Activated CD8-positive, alpha-beta memory T cell treated with anti-CD3 and anti-CD28 coated beads, Interleukin-2, amount 10 ng/mL, durations not matched to agents 7 days and 5 days (primary cell): ENCODE measurements at regions of chr1 and their contacts with region 1.

Region 1: DNA sequence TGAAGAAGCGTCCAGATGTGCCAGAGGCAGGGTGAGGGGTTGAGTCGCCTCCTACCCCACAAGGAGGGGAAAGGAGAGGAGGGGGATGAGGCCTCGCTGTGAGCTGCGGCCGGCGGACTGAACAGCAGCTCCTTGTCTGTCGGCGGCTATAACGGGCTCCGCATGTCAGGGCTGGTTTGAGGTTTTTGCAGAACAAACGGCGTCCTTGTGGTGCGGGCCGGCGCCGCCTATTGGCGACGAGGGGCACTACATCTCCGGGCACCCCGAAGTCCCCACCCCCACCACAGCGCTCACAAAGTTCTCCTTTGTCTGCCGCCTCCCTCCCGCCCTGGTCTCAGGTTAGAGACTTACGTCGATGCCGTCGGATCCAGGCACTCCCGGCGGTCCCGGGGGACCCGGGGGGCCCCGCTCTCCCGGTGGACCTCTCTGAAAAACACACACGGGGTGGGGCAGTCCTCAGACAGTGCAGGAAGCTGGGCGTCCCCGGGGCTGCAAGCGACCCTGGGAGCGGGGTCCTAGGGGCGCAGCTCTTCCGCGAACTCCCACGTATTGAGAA is 1.8 kb downstream of the COL9A2 start:
- DNase-seq: peak; percentile 90
- ATAC-seq: peak; percentile 77
- H3K4me3 Mint-ChIP-seq: peak overlapping the region; percentile 74
- H3K27ac Mint-ChIP-seq: peak overlapping the region; percentile 66
- H3K4me1 Mint-ChIP-seq: peaks cover 42% of the 10 kb centered on the region
- H3K27me3 Mint-ChIP-seq: peaks cover 25% of the 10 kb centered on the region

Region 2: DNA sequence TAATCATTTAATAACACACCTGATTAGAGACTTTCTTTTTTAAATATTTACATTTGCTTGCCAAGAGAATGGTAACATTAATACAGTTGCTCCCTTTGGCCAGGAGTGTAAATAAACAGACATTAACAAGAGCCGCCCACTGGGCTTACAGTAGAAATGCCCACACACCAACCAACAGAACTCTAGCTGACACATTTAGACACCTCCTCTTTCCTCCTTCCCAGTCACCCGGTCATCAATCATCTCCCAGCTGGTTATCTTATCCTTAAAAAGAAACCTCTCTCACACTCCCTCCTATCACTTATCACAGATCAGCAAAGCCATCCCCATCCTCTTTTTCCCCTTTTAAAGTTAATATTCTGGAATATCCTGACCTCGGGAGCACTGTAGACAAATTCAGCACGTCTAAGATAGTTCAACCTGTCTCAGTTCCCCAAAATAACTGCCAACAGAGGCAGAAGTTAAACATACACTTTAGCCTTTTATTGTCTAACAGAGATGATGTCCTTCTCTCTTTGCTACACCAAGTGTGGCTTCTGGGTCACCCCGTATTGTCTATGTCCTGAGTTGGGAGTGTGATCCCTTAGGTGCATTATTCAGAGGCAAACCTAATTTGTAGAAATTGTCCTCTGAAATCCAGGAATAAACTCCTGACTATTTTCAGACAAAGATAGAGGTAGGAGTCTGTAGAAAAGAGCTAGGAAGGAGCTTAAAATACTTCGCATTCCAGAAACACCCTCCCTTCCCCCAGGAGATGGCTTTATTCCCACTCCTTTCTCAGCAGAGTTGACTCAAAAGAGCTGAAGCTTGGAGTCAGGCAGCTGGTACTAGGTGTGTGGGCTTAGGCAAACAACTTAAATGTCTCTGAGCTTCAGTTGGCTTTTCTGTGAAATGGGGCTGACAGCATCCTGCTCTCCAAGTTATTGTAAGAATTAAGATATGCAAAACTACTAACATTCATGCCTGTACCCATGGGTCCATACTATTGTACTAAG is 422.4 kb before region 1 on chr1:
- CTCF ChIA-PET with region 1: no interaction called
- DNase-seq: no peak
- ATAC-seq: no peak
- H3K4me3 Mint-ChIP-seq: no peak overlapping the region
- H3K27ac Mint-ChIP-seq: no peak overlapping the region
- H3K4me1 Mint-ChIP-seq: no peaks in the 10 kb centered on the region
- H3K27me3 Mint-ChIP-seq: peaks cover 64% of the 10 kb centered on the region

Region 3: GRCh38 chr1:40107290-40108262 is 207.7 kb before region 1 on chr1:
- CTCF ChIA-PET with region 1: no interaction called
- DNase-seq: no peak
- ATAC-seq: no peak
- H3K4me3 Mint-ChIP-seq: no peak overlapping the region
- H3K27ac Mint-ChIP-seq: no peak overlapping the region
- H3K4me1 Mint-ChIP-seq: peaks cover 2% of the 10 kb centered on the region
- H3K27me3 Mint-ChIP-seq: peaks cover 19% of the 10 kb centered on the region

Region 4: DNA sequence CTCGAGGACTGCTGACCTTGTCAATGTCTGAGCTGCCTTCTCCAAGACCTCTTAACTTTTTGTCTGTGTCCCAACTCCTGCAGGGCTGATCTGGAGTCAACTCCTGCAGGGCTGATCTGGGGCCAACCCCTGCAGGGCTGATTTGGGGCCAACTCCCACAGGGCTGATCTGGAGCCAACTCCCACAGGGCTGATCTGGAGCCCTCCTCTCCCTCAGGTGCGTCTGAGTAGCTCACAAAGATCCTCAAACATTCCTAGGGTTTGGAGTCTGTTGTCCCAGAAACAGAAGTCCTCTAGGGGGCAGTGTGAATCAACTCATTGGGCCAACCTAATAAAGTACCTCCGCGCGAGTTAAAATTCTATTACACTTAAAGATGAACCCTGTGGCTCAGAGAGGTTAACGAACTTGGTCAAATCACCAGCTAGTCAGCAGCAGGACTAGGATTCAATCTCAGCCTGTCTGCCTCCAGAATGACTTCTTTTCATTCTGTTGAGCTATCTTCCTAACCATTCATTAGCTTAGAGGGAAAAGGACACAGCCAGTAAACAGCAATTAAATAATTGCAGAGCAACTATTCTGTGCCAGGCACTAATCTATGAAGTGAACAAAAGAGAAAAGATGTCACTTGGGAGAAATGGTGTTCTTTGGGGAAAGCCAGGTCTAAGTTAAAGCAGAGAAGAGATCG is 171.3 kb before region 1 on chr1:
- CTCF ChIA-PET with region 1: interaction called, 44 read pairs
- DNase-seq: peak; percentile 68
- ATAC-seq: peak; percentile 83
- H3K4me3 Mint-ChIP-seq: no peak overlapping the region
- H3K27ac Mint-ChIP-seq: no peak overlapping the region
- H3K4me1 Mint-ChIP-seq: peaks cover 16% of the 10 kb centered on the region
- H3K27me3 Mint-ChIP-seq: peaks cover 38% of the 10 kb centered on the region

Region 5: GRCh38 chr1:40161125-40161887 is 154.0 kb before region 1 on chr1 and contains the start of gene RLF:
- CTCF ChIA-PET with region 1: interaction called, 17 read pairs
- DNase-seq: peak; percentile 96
- ATAC-seq: peak; percentile 97
- H3K4me3 Mint-ChIP-seq: no peak within 1 kb of the TSS
- H3K27ac Mint-ChIP-seq: peak within 1 kb of the TSS; percentile 35
- H3K4me1 Mint-ChIP-seq: peaks cover 9% of the 10 kb centered on the region
- H3K27me3 Mint-ChIP-seq: no peaks in the 10 kb centered on the region
- total RNA-seq, gene RLF: 18.8 to 21.4 TPM

Region 6: DNA sequence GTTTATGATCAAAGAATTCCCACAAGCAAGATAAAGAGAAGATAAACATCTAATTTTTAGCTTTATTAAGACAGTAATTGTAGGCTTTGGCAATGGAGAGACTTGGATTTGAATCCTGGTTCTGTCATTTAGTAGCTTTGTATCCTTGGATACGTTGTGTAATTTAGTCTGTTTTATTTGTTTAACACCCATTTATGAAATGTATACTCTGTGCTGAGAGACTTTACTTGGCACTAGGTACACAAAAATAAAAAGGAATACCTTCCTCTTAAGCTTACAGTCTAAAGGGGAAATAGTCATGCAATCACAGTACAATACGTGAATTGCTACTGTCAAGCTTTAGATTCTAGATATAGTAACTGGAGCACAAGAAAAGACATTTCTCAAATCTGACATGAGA is 33.5 kb before region 1 on chr1:
- CTCF ChIA-PET with region 1: interaction called, 12 read pairs
- DNase-seq: no peak
- ATAC-seq: no peak
- H3K4me3 Mint-ChIP-seq: no peak overlapping the region
- H3K27ac Mint-ChIP-seq: no peak overlapping the region
- H3K4me1 Mint-ChIP-seq: no peaks in the 10 kb centered on the region
- H3K27me3 Mint-ChIP-seq: no peaks in the 10 kb centered on the region

Region 7: DNA sequence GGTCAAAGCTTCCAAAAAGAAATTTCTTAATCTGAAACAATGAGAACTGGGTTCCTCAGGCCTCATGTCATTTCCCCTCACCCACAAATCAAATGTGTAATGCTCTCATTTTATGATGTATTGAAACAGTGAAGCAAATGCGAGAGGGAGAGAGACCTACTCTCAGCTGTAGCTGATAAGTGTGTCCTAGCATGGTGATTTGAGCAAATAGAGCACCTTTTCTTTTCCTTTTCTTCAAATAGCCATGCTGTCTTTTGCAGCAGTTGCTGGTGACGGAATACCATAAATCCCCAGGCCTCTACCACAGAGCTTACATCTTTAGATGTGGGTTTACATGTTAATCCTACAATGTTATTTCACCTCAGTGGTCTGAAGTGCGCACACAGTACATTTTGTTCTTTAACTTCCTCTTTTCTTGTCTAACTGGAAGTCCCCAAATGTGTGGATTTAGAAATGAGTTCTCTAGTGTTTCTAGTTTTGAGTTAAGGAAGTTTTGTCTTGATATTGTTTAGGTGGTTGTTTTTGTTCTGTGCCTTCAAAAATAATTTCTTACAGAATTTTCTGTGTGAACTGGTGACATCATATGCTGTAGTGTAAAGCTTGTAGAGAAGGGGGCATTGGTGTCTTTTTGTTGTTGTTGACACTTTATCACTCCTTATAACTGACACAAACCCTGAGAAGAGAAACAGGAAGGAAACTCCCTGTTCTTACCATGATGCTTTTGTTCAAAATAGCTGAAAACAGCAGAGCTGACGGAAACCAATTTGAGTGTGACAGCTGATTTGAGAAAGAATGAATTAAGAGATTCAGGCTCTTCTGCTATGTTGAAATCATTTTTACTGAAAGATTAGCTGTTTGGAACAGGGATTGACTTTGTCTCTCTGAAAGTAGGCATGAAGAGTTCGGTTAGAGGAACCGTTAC is 70.4 kb after region 1 on chr1:
- CTCF ChIA-PET with region 1: interaction called, 20 read pairs
- DNase-seq: peak; percentile 77
- ATAC-seq: peak; percentile 54
- H3K4me3 Mint-ChIP-seq: peak overlapping the region; percentile 72
- H3K27ac Mint-ChIP-seq: peak overlapping the region; percentile 98
- H3K4me1 Mint-ChIP-seq: peaks cover 92% of the 10 kb centered on the region
- H3K27me3 Mint-ChIP-seq: no peaks in the 10 kb centered on the region